ENCODE measurements at regions of chr3 and their contacts with region 1.

Region 1: GRCh38 chr3:30354972-30355371 is 251.4 kb upstream of the TGFBR2 start:
- DNase-seq: no peak
- H3K4me3 Mint-ChIP-seq: no peak overlapping the region
- H3K27ac Mint-ChIP-seq: no peak overlapping the region
- H3K4me1 Mint-ChIP-seq: peaks cover 50% of the 10 kb centered on the region
- H3K27me3 Mint-ChIP-seq: peaks cover 36% of the 10 kb centered on the region

Region 2: DNA sequence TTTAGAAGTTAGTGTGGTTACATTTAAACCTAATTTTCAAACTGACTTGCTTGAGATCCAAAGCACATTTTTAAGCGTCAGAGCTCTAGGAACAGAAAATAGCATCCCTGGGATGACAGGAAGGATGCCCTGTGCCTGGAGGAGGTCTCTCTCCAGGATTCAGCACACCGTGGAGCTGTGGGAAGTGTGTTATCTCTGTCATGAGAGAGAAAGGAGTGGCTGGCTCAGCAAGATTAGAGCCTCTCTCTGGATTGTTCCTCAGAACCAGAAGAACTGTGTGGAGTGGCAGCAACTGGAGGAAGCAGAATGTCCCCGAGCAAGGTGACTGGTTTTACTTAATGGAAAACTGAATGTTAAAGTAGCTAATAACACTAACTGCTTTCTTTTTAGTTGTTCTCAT is 17.9 kb after region 1 on chr3:
- CTCF ChIA-PET with region 1: interaction called, 11 read pairs
- POLR2A ChIA-PET with region 1: no interaction called
- DNase-seq: no peak
- H3K4me3 Mint-ChIP-seq: no peak overlapping the region
- H3K27ac Mint-ChIP-seq: no peak overlapping the region
- H3K4me1 Mint-ChIP-seq: no peaks in the 10 kb centered on the region
- H3K27me3 Mint-ChIP-seq: no peaks in the 10 kb centered on the region